GM18951 (cell line): ENCODE measurements at regions of chr13 and their contacts with region 1.

Region 1: DNA sequence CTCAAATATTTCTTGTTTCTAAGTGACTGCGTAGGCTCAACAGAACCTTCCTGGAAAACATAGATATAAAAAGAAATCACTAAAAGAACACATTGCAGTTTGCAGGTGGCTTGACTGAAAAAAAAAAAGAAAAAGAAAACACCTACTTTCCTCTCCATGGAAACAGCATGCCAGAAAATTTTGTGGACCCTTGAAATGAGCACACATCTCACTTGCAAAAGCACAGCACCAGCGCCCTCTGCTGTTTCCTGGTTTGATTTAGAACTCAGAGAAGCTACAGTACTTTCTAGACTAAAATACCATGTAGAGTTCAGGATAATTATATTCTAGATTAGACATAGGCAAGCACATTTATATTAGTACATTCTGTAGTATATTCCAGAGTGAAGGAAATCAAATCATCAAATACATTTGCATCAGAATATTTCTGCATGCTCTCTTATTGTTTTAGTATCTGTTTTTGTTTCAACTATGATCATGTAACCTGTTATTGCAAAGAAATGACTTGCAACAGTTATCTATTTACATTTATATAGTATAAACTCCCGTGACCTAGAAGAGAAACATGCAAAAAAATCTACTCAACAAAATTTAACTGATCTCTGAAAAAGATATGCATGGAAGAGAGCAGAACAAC is 22.3 kb upstream of the XPO4 start:
- POLR2A ChIP-seq: no peak

Region 2: GRCh38 chr13:20192158-20192835 is 732.6 kb before region 1 on chr13:
- in situ Hi-C with region 1: loop called (anchors 5 kb)
- POLR2A ChIP-seq: no peak

Region 3: DNA sequence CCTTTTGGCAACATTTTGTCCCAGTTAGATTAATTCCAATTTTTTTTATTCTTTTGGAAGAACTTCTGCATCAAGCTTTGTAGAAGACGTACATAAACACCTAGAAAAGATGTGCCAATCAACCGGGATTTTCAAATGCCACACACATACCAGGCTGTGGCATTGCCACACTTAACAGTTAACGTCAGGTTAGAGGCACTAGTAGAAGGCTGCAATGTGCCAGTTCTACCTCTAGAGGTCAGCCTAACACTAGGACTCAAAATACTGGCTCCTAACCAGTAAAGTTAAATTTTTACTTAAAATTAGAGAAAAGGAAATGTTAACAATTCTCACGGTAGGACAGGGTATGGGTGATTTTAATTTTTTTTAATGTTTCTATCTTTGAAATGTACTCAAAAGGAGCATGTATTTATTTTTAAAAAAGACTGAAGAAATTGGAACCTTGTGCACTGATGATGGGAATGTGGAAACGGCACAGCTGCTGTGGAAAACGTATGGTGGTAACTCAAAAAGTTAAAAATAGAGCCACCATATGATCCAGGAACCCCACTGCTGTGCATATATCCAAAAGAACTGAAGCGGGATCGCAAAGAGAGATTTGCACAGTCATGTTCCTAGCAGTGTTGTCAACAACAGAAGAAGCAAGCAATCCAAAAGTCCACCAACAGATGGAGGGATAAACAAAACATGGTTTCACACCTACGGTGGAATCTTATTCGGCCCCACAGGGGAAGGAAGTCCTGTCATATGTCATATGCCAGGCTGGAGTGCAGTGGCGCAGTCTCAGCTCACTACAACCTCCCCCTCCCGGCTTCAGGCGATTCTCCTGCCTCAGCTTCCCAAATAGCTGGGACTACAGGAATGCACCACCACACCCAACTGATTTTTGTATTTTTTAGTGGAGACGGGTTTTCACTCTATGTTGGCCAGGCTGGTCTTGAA is 429.5 kb before region 1 on chr13:
- in situ Hi-C with region 1: loop called (anchors 5 kb)
- POLR2A ChIP-seq: no peak

Region 4: DNA sequence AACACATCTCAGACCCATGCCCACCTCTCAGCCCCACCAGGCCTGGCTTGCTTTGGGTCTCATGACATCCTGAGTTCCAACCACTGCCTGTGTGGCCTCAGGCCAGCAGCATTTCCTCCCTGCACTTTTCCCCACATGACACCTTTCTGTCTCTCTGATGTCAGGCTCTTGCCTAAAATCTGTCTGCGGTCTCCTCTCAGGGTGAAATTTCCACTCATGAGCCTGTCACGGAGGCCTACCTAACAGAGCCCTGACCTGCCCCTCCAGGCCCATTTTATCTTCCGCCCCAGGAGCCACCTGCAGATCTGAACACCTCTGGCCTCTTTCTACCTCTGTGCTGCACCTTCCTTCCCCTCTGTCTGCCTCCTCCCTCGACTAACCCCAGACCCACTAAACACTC is 440.7 kb after region 1 on chr13:
- in situ Hi-C with region 1: no loop called
- POLR2A ChIP-seq: no peak

Region 5: GRCh38 chr13:21476893-21477472 is 552.1 kb after region 1 on chr13:
- in situ Hi-C with region 1: loop called (anchors 25 kb)
- POLR2A ChIP-seq: no peak